Astrocyte of the cerebellum (primary cell): ENCODE measurements at regions of chr11 and their contacts with region 1.

Region 1: GRCh38 chr11:112523477-112523876 is 262.8 kb upstream of the PLET1 start:
- DNase-seq: peak; percentile 19
- H3K4me3 ChIP-seq: no peak overlapping the region
- CTCF ChIP-seq: no peak

Region 2: GRCh38 chr11:112459001-112459400 is 64.5 kb before region 1 on chr11:
- in situ Hi-C with region 1: no loop called
- DNase-seq: no peak
- H3K4me3 ChIP-seq: no peak overlapping the region
- CTCF ChIP-seq: no peak

Region 3: GRCh38 chr11:112485280-112485679 is 38.2 kb before region 1 on chr11:
- in situ Hi-C with region 1: loop called (anchors 5 kb)
- DNase-seq: no peak
- H3K4me3 ChIP-seq: no peak overlapping the region
- CTCF ChIP-seq: no peak

Region 4: DNA sequence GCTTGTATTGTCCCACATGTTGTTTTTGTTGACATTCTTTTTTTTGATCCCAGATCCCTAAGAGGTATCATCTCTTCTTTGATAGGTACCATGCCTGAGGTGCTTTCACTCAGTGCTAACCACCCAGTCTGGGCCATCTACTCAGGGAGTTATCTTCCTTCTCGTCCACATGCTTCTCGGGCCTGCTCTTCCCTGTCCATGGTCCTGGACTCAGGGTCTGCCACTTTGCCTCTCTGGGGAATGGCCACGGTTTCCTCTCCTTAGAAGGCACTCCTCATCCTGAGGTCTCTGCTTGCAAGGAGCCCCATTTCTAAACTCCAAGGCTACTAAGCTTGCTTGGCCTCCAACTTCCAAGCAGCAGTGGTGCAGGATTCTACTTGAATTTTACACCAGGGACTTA is 210.7 kb after region 1 on chr11:
- in situ Hi-C with region 1: no loop called
- DNase-seq: peak; percentile 13
- H3K4me3 ChIP-seq: no peak overlapping the region
- CTCF ChIP-seq: no peak